Right ventricle myocardium inferior (tissue), 1 donor: ENCODE measurements at regions of chr4 and their contacts with region 1.

Region 1: DNA sequence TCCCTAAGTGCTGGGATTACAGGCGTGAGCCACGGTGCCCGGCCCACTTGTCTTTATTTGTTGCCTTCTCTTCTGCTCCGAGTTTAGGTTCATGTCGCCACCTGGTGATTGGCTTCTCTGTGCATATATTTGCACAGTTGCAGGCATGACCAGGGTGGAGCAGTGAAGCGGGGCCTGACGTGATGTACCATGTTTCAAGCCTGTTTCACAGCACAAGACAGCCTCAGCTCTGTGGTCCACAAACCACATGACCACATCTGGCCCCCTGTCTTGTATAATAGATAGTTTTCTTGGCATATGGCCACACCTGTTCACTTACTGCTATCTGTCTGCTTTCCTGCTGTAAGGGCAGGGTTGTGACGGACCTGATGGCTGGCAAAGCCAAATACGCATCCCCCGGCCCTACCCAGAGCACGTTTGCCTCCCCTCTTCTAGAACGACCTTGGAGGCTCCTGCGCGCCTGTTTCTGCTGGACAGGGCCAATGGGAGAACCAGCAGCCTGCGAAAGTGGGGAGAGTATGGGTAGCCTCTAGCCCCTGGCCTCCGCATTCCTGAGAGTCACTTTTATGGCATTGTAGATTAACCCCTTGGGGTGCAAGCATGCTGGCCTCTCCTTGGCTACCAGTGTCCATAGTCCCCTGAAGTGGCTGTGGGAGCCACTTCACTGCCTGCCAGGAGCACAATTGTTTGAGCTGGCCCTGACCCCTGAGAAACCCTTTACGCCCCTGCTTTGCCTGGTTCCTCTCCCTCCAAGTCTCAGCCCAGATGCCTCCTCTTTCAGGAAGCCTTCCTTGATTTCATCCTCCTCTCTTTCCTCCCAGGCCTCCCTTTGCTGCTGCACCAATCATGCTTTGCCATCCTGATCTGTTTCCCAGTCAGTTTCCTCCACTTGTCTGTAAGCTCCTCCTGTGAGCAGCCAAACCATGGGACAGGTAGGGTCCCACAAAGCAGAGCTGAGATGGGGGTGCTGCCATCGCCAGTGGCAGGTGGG is 6.0 kb upstream of the SH3TC1 start:
- DNase-seq: peak; percentile 68
- ATAC-seq: peak; percentile 8

Region 2: DNA sequence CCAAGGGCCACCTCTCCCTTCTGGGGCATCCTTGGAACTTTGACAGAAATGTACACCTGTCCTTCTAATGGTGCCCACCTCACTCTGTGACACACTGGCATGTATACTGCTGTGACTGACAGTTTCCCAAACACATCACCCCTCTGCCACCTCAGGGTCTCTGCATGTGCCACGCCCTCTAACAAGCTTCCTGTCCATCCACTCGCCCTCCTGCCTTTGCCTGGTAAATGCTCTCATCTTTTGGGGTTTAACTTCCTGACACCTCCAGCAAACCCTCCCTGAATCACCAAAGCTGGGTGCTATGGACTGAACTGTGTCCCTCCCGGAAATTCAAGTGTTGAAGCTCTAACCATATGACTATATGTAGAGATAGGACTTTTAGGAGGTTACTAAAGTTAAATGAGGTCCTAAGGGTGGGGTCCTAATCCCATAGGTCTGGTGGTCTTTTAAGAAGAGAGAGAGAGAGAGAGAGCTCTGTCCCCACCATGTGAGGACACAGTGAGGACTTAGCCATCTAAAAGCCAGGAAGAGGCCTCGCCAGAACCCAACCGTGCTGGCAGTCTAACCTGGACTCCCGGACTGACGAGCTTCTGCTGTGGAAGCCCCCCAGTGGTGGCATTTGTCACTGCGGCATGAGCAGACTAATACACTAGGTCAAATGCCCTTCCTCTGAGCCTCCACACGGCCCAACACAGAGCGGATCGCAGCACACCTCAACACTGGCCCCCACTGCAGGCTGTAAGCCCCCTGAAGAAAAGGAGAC is 349.0 kb before region 1 on chr4:
- intact Hi-C with region 1: no loop called
- DNase-seq: peak; percentile 79
- ATAC-seq: peak; percentile 42

Region 3: DNA sequence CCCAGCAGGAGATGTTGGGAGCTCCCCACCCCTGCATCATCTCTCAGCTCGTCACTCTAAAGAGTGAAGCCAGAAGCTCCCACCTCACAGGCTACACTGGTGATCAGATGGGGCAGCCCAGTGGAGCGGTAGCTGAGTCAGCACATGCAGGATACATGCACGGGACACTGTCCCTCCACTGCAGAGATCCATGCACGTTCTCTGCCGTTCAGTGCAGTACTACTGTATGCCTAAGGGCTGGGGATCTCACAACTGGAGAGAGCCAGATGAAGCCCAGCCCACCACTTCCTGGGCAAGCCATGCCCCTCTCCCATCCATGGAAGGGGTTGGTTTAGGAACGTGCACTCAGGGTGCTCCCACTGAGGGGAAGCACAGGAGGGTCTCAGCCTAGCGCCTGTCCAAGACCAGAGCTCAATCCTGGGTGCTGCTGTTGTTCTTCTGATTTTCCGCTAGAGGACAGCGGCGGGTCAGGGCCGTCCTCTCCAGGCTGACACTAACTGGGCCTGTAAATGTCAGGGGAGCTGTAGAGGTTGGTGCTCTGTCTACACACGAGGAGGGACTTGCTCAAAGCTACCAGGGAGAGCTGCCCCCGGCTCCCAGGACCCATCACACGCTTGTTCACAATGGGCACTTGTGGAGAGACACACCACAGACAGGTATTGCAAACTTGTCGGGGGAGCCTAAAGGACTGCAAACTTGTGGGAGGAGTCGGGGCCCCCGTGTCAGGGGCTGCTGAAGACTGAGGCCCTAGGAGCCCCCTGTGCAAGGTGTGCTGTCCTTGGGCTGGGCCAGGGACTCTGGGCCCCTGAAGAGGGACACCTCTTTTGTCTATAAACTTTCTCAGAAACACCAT is 16.3 kb before region 1 on chr4:
- intact Hi-C with region 1: loop called (anchors 1 kb)
- DNase-seq: peak; percentile 78
- ATAC-seq: peak; percentile 76

Region 4: DNA sequence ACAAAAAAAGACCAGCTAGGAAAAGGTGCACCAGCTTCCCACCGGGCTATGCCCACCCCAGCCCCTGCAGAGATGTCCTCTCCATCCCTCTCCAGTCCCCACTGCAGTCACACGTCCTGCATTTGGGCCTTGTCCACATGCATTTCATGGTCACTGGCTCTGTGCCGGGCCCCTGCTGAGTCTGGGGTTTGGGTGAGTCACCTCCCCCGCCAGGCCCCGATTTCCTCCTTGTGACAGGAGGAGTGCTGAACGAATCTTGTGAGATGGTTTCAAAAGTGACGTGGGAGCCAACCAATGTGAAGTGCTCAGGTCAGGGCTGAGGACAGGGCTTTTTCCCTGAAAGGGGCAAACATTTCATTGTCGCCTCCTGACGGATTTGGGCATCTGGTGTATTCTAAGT is 406.6 kb after region 1 on chr4:
- intact Hi-C with region 1: no loop called
- DNase-seq: peak; percentile 53
- ATAC-seq: no peak